ENCODE measurements at regions of chr13 and their contacts with region 1.

Region 1: DNA sequence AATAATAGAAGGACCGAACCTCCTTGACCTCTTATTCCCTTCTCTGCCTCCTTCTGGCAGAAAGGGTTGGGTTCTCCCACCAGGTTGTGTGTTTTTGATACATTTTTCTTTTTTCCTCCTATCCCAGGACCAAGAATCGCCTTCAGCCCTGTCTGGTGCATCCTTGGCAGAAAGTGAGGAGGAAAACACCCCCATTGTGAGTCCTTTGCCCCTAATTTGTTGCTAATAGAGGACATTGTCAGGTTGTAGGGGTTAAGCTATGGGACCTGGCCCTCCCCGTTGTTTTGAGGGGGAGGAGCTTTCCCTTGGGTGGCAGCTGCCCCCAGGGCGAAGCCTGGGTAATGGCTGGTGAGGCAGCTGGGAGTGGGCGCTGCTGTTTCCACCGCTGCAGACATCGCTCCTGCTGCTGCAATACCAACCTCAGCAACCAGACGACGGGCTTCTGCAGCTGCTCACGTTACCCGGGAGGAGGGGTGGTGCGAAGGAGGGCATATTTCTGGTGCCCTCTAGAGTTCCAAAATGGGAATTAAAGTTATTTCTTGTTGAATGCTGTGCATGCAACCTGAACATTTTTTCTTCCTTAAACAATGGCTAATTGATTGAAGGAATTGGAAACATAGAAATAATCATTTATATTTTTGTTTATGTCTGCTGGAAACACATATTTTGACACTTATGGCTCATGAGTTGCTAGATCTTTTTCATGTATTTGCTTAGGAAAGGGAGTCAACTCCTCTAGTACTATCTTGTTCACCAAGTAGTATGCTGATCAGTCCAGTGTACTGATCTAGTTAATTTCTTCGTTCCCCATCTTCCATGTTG is 1.5 kb downstream of the ZMYM2 start:
- DNase-seq: peak; percentile 87
- H3K4me3 ChIP-seq: peak overlapping the region; percentile 79 to 90
- H3K27ac ChIP-seq: peak overlapping the region; percentile 97 to 100
- H3K4me1 ChIP-seq: peaks cover 5% of the 10 kb centered on the region
- H3K27me3 ChIP-seq: no peaks in the 10 kb centered on the region
- CTCF ChIP-seq: peak; percentile 72 to 97 (median 91)
- POLR2A ChIP-seq: peak; percentile 72

Region 2: GRCh38 chr13:19633479-19634255 is 326.4 kb before region 1 on chr13 and contains the start of gene MPHOSPH8:
- intact Hi-C with region 1: loop called (anchors 5 kb)
- DNase-seq: peak; percentile 96
- H3K4me3 ChIP-seq: peak within 1 kb of the TSS; percentile 65 to 83
- H3K27ac ChIP-seq: peak within 1 kb of the TSS; percentile 94
- H3K4me1 ChIP-seq: peaks cover 9% of the 10 kb centered on the region
- H3K27me3 ChIP-seq: no peaks in the 10 kb centered on the region
- CTCF ChIP-seq: peak in 1 of 4 experiments; percentile 21
- POLR2A ChIP-seq: peak; percentile 92
- total RNA-seq, gene MPHOSPH8: 24.3 to 30.5 TPM

Region 3: DNA sequence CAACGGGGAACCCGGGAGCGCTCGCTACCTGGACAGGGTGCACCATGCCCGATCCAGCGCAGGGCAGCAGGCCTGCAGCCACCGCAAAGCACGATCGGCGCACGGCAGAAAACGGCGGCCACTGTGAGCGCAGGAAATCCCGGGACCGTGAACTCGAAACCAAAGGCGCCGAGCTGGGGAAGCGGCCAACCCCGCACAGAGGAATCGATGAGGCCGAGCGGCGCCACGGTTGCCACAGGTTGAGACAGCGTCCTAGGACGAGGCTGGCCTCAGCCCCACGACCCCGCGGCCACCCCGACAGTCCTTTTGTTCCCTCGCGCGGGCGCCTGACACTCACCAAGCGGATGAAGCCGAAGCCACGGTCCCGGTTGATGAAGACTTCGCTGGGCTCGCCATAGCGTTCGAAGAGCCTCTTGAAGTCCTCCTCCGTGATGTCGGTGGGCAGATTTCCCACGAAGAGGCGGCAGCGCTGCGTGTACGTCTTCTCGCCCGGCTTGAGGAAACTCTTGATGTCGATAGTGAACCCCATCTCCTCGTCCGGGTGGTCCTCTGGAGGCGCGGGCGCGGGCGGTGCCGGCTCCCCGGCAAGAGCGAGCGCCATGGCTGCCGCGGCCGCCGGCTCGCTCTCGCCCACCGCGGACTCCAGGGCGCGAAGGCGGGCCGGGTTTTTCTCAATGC is 177.9 kb before region 1 on chr13:
- intact Hi-C with region 1: loop called (anchors 5 kb)
- DNase-seq: peak; percentile 34
- H3K4me3 ChIP-seq: peak overlapping the region; percentile 62 to 69
- H3K27ac ChIP-seq: peak overlapping the region; percentile 89 to 90
- H3K4me1 ChIP-seq: no peaks in the 10 kb centered on the region
- H3K27me3 ChIP-seq: no peaks in the 10 kb centered on the region
- CTCF ChIP-seq: no peak
- POLR2A ChIP-seq: no peak

Region 4: GRCh38 chr13:19863323-19864023 is 96.6 kb before region 1 on chr13 and contains the start of gene ZMYM5:
- intact Hi-C with region 1: loop called (anchors 5 kb)
- DNase-seq: peak; percentile 99
- H3K4me3 ChIP-seq: peak within 1 kb of the TSS; percentile 86 to 90
- H3K27ac ChIP-seq: peak within 1 kb of the TSS; percentile 97 to 99
- H3K4me1 ChIP-seq: no peaks in the 10 kb centered on the region
- H3K27me3 ChIP-seq: no peaks in the 10 kb centered on the region
- CTCF ChIP-seq: peak in 3 of 4 experiments; percentile 16 to 48 (median 31)
- POLR2A ChIP-seq: peak; percentile 94
- total RNA-seq, gene ZMYM5: 19.6 to 21.5 TPM

Region 5: DNA sequence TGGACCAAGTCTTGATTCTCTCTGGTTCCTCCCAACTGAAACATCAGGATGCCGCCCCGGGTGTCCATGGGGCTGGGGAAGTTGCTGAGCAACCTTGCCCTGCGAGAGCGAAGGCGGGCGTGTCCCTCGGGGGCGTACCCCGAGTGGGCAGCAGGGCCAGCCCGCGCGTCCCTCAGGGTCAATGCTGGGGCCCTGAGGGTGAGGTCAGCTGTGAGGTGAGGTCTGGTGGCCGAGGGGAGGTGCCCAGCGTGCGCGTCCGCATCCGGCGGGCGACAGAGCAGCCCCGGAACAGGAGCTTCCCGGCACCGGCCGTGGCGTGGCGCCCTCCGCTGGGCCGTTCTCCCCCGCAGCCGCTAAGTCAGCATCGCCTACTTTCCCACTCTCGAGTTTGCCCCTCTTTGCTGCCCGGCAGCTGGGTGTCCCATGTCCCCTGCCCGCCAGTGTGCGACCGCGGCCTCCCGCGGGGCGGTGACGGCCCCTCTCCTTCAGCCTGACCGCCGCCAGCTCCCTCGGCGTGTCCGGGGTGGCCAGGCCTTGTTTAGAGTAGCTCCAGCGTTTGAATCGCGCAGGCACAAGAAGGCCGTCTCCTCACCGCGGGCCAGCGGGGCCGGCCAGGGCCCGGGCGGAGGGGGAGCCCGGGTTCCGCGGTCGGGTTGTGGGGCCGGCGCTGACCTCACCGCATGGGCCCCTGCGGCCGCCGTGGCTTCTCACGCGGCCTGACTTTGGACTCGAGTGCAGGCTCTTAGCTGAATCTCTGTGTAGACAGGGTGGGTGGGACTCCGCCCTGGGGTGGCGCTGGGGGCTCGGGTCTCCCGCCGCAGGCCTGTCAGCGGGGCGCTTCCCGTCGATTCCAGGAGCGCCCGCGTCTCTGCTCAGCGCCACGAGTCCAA is 167.8 kb after region 1 on chr13:
- intact Hi-C with region 1: loop called (anchors 10 kb)
- DNase-seq: peak; percentile 37
- H3K4me3 ChIP-seq: peak overlapping the region; percentile 39 to 51
- H3K27ac ChIP-seq: peak overlapping the region; percentile 84
- H3K4me1 ChIP-seq: no peaks in the 10 kb centered on the region
- H3K27me3 ChIP-seq: no peaks in the 10 kb centered on the region
- CTCF ChIP-seq: peak in 3 of 4 experiments; percentile 27 to 52 (median 42)
- POLR2A ChIP-seq: peak; percentile 24

Region 6: DNA sequence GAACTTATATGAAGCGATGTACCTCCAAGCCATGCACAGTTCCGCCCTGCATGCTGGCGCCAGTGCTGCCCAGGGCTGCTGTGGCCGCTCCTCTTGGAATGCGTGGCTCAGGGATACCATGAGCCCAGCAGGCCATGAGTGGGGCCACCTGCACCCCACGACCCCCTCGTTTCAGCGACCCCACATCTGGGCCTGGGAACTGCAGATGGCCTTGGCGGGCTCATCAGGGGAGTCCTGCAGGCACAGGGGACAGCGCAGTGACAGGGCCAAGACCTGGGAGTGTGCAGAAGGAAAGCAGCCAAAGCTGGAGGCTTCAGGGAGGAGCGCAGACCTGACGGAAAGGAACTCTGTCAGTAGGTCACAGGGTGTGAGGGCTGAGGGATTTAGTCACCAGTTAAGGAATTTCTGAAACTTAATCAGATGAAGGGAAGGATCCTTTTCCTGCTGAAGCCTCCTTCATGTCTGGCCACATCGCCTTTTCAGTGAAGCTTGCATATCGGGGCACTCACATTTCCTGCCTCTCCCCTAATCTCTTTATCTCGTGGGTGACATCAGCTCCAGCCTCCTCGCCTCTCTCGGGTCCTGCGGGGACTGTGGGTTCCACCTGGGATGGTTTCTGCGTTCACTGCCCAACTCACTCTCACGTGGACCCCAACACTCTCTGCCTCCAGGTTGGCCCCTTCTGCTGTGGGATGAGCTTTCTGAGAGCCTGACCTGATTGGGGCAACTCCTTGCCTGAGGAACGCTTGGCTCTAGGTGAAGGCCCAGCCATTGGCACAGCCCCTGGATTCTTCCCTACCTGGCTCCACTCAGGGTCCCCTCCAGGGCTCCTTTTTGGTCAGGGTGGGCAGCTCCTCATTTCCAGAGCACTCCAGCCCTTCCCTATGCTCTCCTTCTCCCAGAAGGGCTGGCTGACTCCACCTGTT is 442.2 kb after region 1 on chr13:
- intact Hi-C with region 1: no loop called
- DNase-seq: no peak
- H3K4me3 ChIP-seq: no peak overlapping the region
- H3K27ac ChIP-seq: no peak overlapping the region
- H3K4me1 ChIP-seq: no peaks in the 10 kb centered on the region
- H3K27me3 ChIP-seq: no peaks in the 10 kb centered on the region
- CTCF ChIP-seq: no peak
- POLR2A ChIP-seq: no peak

Measured in prostate gland (tissue), 2 donors.